ENCODE measurements at regions of chr17 and their contacts with region 1.

Region 1: DNA sequence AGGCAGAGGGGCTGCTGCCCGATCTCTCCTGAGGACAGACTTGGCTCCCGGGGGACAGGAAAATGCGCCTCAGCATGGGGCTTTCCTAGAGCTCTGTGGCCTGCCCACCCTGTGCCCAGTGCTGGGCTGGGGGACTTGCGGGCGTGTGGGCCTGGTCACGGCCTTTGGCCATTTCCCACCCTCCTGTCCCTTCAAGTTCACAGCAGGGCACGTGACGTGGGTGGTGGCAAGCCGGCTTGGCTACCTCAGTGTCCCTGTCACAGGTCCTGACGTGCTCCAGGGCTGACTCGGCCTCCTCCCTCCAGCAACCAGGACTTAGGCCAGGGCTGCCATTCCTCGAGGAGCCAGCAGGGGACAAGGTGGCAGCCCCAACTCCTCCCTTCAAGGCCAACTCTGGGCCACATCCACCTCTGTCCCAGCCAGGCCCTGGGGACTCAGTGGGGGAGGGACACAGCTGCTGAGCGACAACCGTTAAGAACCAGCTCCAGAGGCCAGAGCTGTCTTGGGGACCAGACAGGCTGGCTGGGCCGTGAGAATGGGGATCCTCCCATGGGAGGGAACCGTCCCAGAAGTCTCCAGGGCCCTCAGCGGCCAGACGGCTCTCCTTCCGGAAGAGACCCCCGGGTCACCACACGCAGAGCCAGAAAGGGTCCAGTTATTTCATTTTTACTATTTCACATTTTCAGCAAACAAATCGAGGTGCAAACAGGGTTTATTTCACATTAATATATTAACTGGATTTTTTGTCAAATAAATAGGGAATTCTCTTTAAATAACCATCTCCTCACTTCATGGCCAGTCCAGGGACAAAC is 1.1 kb upstream of the UNC13D start:
- DNase-seq: peak; percentile 85 to 93 (median 89)
- H3K4me3 ChIP-seq: peak overlapping the region in 2 of 3 experiments; percentile 89 to 91
- H3K4me3 Mint-ChIP-seq: peak overlapping the region; percentile 37 to 42
- H3K27ac ChIP-seq: peak overlapping the region; percentile 87
- H3K27ac Mint-ChIP-seq: peak overlapping the region; percentile 87 to 91 (median 88)
- H3K4me1 ChIP-seq: peaks cover 33 to 52% of the 10 kb centered on the region in 2 donors
- H3K4me1 Mint-ChIP-seq: peaks cover 23% of the 10 kb centered on the region
- H3K27me3 ChIP-seq: no peaks in the 10 kb centered on the region
- H3K27me3 Mint-ChIP-seq: no peaks in the 10 kb centered on the region
- CTCF ChIP-seq: peak; percentile 92

Region 2: GRCh38 chr17:75667021-75667790 is 178.0 kb before region 1 on chr17 and contains the starts of genes RECQL5 and SAP30BP:
- intact Hi-C with region 1: loop called in 1 of 2 experiments (anchors 10 kb)
- DNase-seq: peak; percentile 98 to 99 (median 98)
- H3K4me3 ChIP-seq: peak within 1 kb of the TSS; percentile 89 to 97 (median 92)
- H3K4me3 Mint-ChIP-seq: peak within 1 kb of the TSS in 1 of 2 donors; percentile 60
- H3K27ac ChIP-seq: peak within 1 kb of the TSS; percentile 84 to 99
- H3K27ac Mint-ChIP-seq: peak within 1 kb of the TSS in 3 of 7 donors; percentile 63 to 84 (median 72)
- H3K4me1 ChIP-seq: peaks cover 17 to 22% of the 10 kb centered on the region in 2 donors
- H3K4me1 Mint-ChIP-seq: peaks cover 12% of the 10 kb centered on the region
- H3K27me3 ChIP-seq: no peaks in the 10 kb centered on the region
- H3K27me3 Mint-ChIP-seq: peaks cover 0 to 2% (median 0%) of the 10 kb centered on the region in 3 donors
- CTCF ChIP-seq: no peak
- polyA plus RNA-seq, gene RECQL5: 3.1 to 27.7 (median 4.4) TPM
- polyA plus RNA-seq, gene SAP30BP: 43.8 to 130 (median 61.6) TPM

Region 3: GRCh38 chr17:75779231-75779986 is 65.8 kb before region 1 on chr17:
- intact Hi-C with region 1: loop called in 1 of 2 experiments (anchors 5 kb)
- DNase-seq: peak; percentile 99
- H3K4me3 ChIP-seq: peak overlapping the region; percentile 67 to 99 (median 96)
- H3K4me3 Mint-ChIP-seq: peak overlapping the region; percentile 93 to 99
- H3K27ac ChIP-seq: peak overlapping the region; percentile 93 to 95
- H3K27ac Mint-ChIP-seq: peak overlapping the region; percentile 96 to 99 (median 98)
- H3K4me1 ChIP-seq: peaks cover 46 to 60% of the 10 kb centered on the region in 2 donors
- H3K4me1 Mint-ChIP-seq: peaks cover 42% of the 10 kb centered on the region
- H3K27me3 ChIP-seq: no peaks in the 10 kb centered on the region
- H3K27me3 Mint-ChIP-seq: peaks cover 0 to 2% (median 1%) of the 10 kb centered on the region in 3 donors
- CTCF ChIP-seq: peak; percentile 33